Astrocyte of the cerebellum (primary cell): ENCODE measurements at regions of chr3 and their contacts with region 1.

Region 1: GRCh38 chr3:108130701-108131474 is 40.1 kb upstream of the CD47 start:
- DNase-seq: peak; percentile 51
- H3K4me3 ChIP-seq: no peak overlapping the region
- CTCF ChIP-seq: no peak

Region 2: DNA sequence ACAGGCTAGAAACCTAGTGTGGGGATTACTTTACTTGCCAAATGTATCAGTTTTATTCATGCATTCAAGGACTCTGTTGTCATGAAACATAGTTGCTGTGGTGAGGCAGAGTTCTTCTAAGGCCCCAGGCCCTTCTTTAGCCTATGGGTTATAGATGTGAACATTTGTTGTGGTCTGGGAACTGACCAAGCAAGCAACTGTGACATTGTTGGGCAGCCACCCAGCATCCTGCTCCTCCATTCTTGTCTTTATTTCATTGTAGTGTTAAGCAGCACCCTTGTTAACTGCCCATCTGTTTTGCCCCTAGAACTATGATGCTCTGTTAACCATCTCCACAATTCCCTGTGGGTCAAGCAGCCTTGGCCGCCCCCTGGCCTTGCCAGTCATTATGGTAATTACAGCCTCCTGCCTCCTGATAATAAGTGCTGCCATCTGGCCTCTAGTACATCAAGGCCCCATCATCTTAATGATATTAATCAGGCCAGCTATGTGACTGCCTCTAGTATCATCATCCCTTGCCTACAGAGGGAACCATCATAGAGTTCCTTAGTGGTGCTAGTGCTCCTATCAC is 103.6 kb after region 1 on chr3:
- in situ Hi-C with region 1: loop called (anchors 5 kb)
- DNase-seq: peak; percentile 18
- H3K4me3 ChIP-seq: no peak overlapping the region
- CTCF ChIP-seq: no peak